IMR-90 (cell line): ENCODE measurements at regions of chr22 and their contacts with region 1.

Region 1: DNA sequence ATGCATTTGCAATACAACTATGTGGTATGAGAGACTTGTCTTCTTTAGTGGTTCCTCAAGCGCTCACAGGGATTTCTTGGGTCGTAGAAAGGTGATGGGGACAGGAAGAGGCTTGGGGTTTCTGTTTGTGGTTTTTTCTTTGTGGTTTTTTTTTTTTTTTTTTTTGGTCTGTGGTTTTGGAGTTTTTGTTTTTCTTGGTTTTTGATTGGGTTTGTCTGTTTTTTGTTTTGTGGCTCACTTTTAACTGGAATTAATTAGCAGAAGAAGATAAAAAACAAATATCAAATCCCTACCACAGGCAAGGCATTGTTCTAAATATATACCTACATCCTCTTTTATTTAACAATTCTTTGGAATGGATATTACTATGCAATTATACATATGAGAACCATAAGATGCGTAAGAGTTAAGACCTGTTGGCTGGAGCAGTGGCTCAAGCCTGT is 5.5 kb downstream of the TTC28 start:
- DNase-seq: peak; percentile 43
- ATAC-seq: peak; percentile 37; the same call in 1 of the 2 replicates
- H3K4me3 ChIP-seq: no peak overlapping the region
- H3K27ac ChIP-seq: no peak overlapping the region
- H3K4me1 ChIP-seq: peaks cover 1% of the 10 kb centered on the region; the same call in 1 of the 2 replicates
- H3K27me3 ChIP-seq: no peaks in the 10 kb centered on the region
- CTCF ChIP-seq: no peak
- POLR2A ChIP-seq: no peak
- RAD21 ChIP-seq: no peak

Region 2: DNA sequence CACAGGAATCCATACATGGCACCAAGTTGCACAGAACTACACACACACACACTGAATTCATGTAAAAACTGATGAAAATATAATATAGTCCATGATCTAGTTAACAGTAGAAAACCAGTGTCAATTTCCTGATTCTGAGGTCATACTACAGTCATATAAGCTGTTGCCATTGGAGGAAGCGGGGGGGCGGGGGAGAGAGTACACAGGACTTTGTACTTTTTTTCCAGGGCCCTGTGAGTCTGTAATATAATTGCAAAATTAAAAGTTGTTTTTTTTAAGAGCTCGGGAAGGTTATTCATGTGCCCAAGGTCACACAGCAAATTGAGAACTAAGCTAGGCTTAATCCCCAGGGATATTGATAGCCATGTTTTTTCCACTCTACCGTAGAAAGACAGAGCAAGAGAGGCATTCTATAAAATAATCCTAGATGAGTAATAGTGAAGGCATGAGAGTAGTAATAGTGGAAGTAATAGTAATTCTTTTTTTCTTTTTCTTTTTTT is 1184.9 kb before region 1 on chr22:
- CTCF ChIA-PET with region 1: no interaction called
- POLR2A ChIA-PET with region 1: interaction called, 14 read pairs
- dilution Hi-C with region 1: no loop called
- in situ Hi-C with region 1: no loop called
- intact Hi-C with region 1: no loop called
- DNase-seq: peak; percentile 52
- ATAC-seq: peak; percentile 53
- H3K4me3 ChIP-seq: no peak overlapping the region
- H3K27ac ChIP-seq: no peak overlapping the region
- H3K4me1 ChIP-seq: peaks cover 12% of the 10 kb centered on the region
- H3K27me3 ChIP-seq: peaks cover 10% of the 10 kb centered on the region
- CTCF ChIP-seq: no peak
- POLR2A ChIP-seq: no peak
- RAD21 ChIP-seq: no peak

Region 3: DNA sequence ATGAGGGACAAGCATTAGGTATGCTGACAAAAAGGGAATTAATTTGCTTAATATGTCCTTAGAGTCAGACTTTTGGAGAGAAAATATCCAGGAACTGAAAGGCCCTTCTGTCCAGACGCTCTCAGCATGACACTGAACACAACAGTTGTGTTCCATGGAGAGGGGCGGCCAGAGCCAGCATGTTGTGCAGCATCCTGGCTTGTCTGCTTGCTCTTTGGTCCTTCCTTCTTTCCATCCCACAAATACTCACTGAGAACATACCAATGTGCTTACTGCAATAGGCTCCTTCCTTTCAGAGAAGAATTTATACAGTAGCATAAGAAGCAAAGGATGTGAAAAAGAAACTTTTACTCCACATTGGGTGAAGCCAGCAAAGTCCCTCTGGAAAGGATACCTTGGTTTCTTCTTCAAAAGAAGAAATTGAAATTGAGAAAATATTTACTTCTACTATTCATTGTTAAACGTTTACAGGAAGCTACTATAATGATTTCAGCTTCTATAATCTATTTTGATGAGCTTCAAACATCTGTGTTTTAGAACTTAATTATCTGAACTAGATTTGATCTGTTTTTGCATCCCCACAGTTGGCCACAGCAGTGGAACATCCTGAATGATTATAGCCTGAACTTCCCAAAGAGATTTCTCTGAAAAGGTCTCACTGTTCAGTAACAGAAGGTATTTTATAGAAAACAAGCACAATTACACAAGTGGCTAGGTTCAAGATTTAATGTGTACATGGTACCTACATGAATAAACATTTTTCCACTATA is 451.0 kb before region 1 on chr22:
- CTCF ChIA-PET with region 1: no interaction called
- POLR2A ChIA-PET with region 1: no interaction called
- dilution Hi-C with region 1: no loop called
- in situ Hi-C with region 1: no loop called
- intact Hi-C with region 1: loop called (anchors 5 kb)
- DNase-seq: peak; percentile 64
- ATAC-seq: peak; percentile 91
- H3K4me3 ChIP-seq: no peak overlapping the region
- H3K27ac ChIP-seq: no peak overlapping the region
- H3K4me1 ChIP-seq: peaks cover 3% of the 10 kb centered on the region
- H3K27me3 ChIP-seq: no peaks in the 10 kb centered on the region
- CTCF ChIP-seq: no peak
- POLR2A ChIP-seq: no peak
- RAD21 ChIP-seq: no peak

Region 4: GRCh38 chr22:28629420-28630176 is 44.5 kb before region 1 on chr22:
- CTCF ChIA-PET with region 1: no interaction called
- POLR2A ChIA-PET with region 1: no interaction called
- dilution Hi-C with region 1: no loop called
- in situ Hi-C with region 1: no loop called
- intact Hi-C with region 1: no loop called
- DNase-seq: peak; percentile 24
- ATAC-seq: no peak
- H3K4me3 ChIP-seq: no peak overlapping the region
- H3K27ac ChIP-seq: no peak overlapping the region
- H3K4me1 ChIP-seq: 0 out of 2 replicates have a peak, but pooled peaks cover 1% of the 10 kb centered on the region
- H3K27me3 ChIP-seq: no peaks in the 10 kb centered on the region
- CTCF ChIP-seq: no peak
- POLR2A ChIP-seq: no peak
- RAD21 ChIP-seq: no peak

Region 5: DNA sequence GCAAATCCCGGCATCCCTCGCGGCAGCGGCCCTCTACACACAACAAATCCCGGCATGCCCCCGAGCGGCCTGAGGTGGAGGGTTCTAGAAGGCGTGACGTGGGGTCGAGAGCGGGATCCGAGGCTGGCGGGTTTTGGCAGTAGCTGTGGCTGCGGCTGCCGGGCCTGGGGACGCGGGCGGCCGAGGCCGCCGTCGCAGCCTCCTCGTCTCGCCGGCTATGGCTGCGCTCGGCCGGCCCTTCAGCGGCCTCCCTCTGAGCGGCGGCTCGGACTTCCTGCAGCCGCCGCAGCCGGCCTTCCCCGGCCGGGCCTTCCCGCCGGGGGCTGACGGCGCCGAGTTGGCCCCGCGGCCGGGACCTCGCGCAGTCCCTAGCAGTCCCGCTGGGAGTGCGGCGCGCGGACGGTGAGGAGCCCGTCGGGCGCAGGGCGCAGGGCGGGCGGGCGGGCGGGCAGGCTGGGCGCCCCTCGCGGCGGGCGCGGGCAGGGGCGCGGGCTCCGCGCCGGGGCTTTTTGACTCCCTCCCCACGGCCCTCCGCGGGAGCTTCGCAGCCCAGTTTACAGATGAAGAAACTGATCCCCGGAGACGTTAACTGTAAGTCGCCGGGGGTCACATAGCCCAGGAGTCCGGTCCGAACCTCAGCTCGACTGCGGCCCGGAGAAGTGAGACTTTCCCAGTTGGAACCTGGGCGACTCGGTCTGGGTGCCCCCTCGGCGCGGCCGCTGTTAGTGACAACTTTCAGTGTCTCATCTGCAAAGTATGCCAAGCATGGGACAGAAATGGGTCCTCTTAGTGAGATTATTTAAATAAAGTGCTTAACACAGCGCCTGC is 98.7 kb after region 1 on chr22 and contains the start of gene CCDC117:
- CTCF ChIA-PET with region 1: no interaction called
- POLR2A ChIA-PET with region 1: no interaction called
- dilution Hi-C with region 1: no loop called
- in situ Hi-C with region 1: no loop called
- intact Hi-C with region 1: loop called (anchors 5 kb)
- DNase-seq: peak; percentile 95
- ATAC-seq: peak; percentile 95
- H3K4me3 ChIP-seq: peak within 1 kb of the TSS; percentile 61
- H3K27ac ChIP-seq: peak within 1 kb of the TSS; percentile 79
- H3K4me1 ChIP-seq: no peaks in the 10 kb centered on the region
- H3K27me3 ChIP-seq: no peaks in the 10 kb centered on the region
- CTCF ChIP-seq: peak; percentile 45
- POLR2A ChIP-seq: peak; percentile 71; the same call in 1 of the 2 replicates
- RAD21 ChIP-seq: no peak; the same call in 1 of the 2 replicates
- total RNA-seq, gene CCDC117: 7.0 and 15.6 TPM in 2 replicates